Motor neuron (in vitro differentiated cells): ENCODE measurements at regions of chr6 and their contacts with region 1.

Region 1: DNA sequence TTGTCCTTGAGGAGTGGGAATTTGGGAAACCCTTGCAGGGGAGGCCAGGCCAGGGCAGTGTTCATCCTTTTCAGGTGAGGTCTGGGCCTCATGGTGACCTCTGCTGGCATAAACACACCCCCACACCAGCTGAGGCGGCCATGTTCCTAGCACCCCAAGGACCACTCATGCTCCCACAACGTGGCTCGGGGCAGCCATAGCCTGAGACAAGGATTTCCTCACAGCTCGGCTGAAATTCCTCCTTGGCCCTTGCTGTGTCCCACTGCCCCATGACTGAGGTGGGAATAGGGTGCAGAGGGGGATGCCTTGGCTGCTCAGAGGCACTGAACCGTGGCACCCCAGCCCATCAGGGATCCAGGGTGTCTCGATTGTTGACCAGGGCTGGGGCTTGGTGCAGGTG is 27.3 kb upstream of the SPDEF start:
- ATAC-seq: peak in 2 of 8 experiments; percentile 24 to 41
- H3K4me3 ChIP-seq: no peak overlapping the region
- H3K27ac ChIP-seq: no peak overlapping the region
- H3K4me1 ChIP-seq: peaks cover 0 to 3% of the 10 kb centered on the region in 2 donors

Region 2: DNA sequence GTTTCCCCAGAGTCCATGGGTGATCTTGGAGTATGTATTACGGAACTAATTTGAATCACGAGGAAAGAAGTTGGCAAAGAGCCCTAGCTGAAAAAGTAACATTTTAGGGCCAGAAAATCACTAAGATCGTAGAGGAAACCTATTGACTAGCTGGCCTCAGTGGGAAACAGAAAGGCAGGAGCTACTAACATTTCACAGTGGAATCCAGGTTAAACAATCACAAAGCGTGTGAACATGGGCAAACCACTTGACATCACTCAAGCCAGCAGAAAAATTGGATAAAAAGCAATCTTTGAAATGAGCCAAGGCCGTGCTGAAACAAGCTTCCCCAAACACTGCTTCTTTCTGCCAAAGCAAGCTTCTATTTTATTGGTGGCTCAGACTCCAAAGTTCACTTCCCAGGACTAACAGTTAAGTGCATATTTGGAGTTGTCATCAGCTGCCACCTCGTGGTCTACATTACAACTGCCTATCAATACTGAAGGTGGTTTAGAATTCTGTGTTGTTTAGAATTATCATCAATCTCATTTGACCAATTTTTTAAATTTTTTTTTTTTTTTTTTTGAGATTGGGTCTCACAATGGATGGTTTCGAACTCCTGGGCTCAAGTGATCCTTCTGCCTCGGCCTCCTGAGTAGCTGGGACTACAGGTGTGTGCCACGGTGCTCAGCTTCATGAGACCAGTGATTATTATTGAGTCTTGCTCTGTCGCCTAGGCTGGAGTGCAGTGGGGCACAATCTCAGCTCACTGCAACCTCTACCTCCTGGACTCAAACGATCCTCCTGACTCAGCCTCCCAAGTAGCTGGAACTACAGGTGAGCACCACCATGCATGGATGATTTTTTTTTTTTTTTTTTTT is 168.2 kb before region 1 on chr6:
- in situ Hi-C with region 1: no loop called
- ATAC-seq: peak in 3 of 8 experiments; percentile 53 to 67 (median 63)
- H3K4me3 ChIP-seq: no peak overlapping the region
- H3K27ac ChIP-seq: no peak overlapping the region
- H3K4me1 ChIP-seq: peaks cover 9 to 10% of the 10 kb centered on the region in 2 donors

Region 3: DNA sequence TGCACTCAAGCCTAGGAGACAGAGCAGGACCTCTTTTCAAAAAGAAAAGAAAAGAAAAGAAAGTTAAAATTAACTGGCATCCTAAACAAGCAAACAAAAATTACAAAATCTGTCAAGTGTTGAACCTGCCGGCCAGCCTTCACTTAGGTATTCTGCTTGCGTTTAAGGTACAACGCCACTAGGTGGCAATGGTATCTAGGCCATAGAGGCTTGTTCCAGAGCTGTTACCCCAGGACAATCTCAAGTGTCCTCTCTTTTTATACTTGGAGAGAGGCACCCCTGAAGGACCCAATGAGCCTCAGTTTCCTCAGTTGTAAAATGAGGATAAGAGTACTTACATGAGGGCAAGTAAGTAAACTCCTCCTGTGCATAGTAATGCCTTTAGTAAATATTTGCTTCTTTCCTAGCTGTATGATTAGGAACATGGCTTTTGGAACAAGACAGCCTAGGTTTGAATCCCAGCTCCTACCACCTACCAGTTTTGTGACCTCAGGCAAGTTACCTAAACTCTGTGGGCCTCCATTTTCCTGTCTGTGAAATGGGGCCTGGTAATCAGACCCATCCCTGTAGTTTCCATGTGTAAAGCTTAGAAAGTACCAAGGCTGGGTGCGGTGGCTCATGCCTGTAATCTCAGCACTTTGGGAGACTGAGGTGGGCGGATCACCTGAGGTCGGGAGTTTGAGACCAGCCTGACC is 123.4 kb before region 1 on chr6:
- in situ Hi-C with region 1: loop called in 1 of 9 experiments (anchors 25 kb)
- ATAC-seq: peak in 4 of 8 experiments; percentile 9 to 23 (median 14)
- H3K4me3 ChIP-seq: no peak overlapping the region
- H3K27ac ChIP-seq: no peak overlapping the region
- H3K4me1 ChIP-seq: peaks cover 6 to 9% of the 10 kb centered on the region in 2 donors